Activated CD4-positive, alpha-beta memory T cell treated with anti-CD3 and anti-CD28 coated beads, Interleukin-2, amount 10 ng/mL, durations not matched to agents 7 days and 5 days (primary cell): ENCODE measurements at regions of chr17 and their contacts with region 1.

Region 1: GRCh38 chr17:32006957-32007462 is at the start of gene LRRC37B:
- DNase-seq: peak; percentile 90
- H3K4me3 Mint-ChIP-seq: peak within 1 kb of the TSS; percentile 84
- H3K27ac Mint-ChIP-seq: peak within 1 kb of the TSS; percentile 82
- H3K4me1 Mint-ChIP-seq: peaks cover 32% of the 10 kb centered on the region
- H3K27me3 Mint-ChIP-seq: no peaks in the 10 kb centered on the region
- total RNA-seq, gene LRRC37B: 41.1 to 44.9 TPM

Region 2: GRCh38 chr17:31869797-31870568 is 137.0 kb before region 1 on chr17:
- CTCF ChIA-PET with region 1: no interaction called
- POLR2A ChIA-PET with region 1: no interaction called
- DNase-seq: no peak
- H3K4me3 Mint-ChIP-seq: no peak overlapping the region
- H3K27ac Mint-ChIP-seq: no peak overlapping the region
- H3K4me1 Mint-ChIP-seq: no peaks in the 10 kb centered on the region
- H3K27me3 Mint-ChIP-seq: no peaks in the 10 kb centered on the region

Region 3: DNA sequence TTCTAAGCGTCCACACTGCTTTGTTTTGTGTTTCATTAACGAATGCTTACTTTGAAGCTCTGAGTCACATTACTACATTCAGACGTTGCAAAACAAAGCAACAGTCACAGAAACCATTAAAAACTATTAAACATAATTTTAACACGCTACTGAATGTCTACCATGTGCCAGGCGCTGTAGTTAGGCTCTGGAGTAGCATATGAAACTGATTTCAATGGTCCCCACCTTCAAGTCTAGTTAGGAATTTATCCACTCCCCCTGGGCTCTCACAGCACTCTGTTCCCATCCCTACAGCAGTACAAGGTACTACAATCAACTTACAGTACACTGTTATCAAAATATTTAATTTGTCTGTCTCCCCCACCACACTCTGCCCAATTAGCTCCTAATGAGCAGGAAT is 106.1 kb before region 1 on chr17:
- CTCF ChIA-PET with region 1: interaction called, 5 read pairs
- POLR2A ChIA-PET with region 1: interaction called, 12 read pairs
- DNase-seq: no peak
- H3K4me3 Mint-ChIP-seq: no peak overlapping the region
- H3K27ac Mint-ChIP-seq: no peak overlapping the region
- H3K4me1 Mint-ChIP-seq: peaks cover 26% of the 10 kb centered on the region
- H3K27me3 Mint-ChIP-seq: no peaks in the 10 kb centered on the region

Region 4: GRCh38 chr17:31935512-31935911 is 71.5 kb before region 1 on chr17:
- CTCF ChIA-PET with region 1: interaction called, 12 read pairs
- POLR2A ChIA-PET with region 1: interaction called, 10 read pairs
- DNase-seq: no peak
- H3K4me3 Mint-ChIP-seq: no peak overlapping the region
- H3K27ac Mint-ChIP-seq: no peak overlapping the region
- H3K4me1 Mint-ChIP-seq: peaks cover 17% of the 10 kb centered on the region
- H3K27me3 Mint-ChIP-seq: no peaks in the 10 kb centered on the region

Region 5: GRCh38 chr17:31997005-31997404 is 10.0 kb before region 1 on chr17:
- CTCF ChIA-PET with region 1: interaction called, 12 read pairs
- POLR2A ChIA-PET with region 1: interaction called, 13 read pairs
- DNase-seq: no peak
- H3K4me3 Mint-ChIP-seq: no peak overlapping the region
- H3K27ac Mint-ChIP-seq: no peak overlapping the region
- H3K4me1 Mint-ChIP-seq: no peaks in the 10 kb centered on the region
- H3K27me3 Mint-ChIP-seq: no peaks in the 10 kb centered on the region

Region 6: DNA sequence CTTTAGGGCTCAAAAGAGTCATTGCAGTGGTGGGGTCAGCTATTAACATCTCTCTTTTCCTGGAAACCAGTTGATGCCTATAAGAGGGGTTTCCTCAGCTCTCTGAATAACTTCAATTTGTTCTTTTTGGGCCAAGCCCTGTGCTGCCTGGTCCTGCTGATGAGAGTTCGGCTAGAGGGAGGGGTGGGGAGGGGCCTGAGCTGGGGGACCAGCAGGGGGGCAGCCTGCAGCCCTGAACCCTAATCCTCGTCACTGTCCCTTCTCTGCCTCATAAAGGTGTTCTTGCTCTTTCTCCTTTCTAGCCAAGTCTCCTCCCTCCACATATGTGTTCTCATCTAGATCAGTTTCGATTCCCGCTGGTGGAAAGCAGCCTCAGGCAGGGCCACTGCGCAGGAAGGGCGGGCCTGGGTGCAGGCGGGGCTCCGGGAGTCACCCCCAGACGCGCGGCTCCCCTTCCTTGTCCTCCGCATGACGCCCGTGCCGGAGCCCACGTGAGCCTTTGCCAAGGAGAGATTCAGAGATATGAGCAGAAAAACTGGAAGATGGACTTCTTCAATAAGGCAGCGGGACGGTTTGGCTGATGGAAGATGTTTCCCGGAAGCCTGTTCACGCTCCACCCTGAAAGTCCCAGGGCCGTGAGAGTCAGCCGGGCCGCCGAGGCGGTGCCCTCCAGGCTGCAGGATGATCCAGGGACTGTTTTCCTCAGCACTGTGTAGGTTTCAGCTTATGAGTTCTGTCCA is 120.3 kb after region 1 on chr17:
- CTCF ChIA-PET with region 1: interaction called, 20 read pairs
- POLR2A ChIA-PET with region 1: interaction called, 15 read pairs
- DNase-seq: peak; percentile 92
- H3K4me3 Mint-ChIP-seq: peak overlapping the region; percentile 88
- H3K27ac Mint-ChIP-seq: peak overlapping the region; percentile 98
- H3K4me1 Mint-ChIP-seq: peaks cover 32% of the 10 kb centered on the region
- H3K27me3 Mint-ChIP-seq: no peaks in the 10 kb centered on the region

Region 7: GRCh38 chr17:32142038-32142856 is 135.2 kb after region 1 on chr17 and contains the start of gene RHOT1:
- CTCF ChIA-PET with region 1: interaction called, 98 read pairs
- POLR2A ChIA-PET with region 1: interaction called, 47 read pairs
- DNase-seq: peak; percentile 74
- H3K4me3 Mint-ChIP-seq: peak within 1 kb of the TSS; percentile 99
- H3K27ac Mint-ChIP-seq: peak within 1 kb of the TSS; percentile 82
- H3K4me1 Mint-ChIP-seq: peaks cover 34% of the 10 kb centered on the region
- H3K27me3 Mint-ChIP-seq: no peaks in the 10 kb centered on the region
- total RNA-seq, gene RHOT1: 26.0 to 26.4 TPM